Panc1 (cell line): ENCODE measurements at regions of chr10 and their contacts with region 1.

Region 1: DNA sequence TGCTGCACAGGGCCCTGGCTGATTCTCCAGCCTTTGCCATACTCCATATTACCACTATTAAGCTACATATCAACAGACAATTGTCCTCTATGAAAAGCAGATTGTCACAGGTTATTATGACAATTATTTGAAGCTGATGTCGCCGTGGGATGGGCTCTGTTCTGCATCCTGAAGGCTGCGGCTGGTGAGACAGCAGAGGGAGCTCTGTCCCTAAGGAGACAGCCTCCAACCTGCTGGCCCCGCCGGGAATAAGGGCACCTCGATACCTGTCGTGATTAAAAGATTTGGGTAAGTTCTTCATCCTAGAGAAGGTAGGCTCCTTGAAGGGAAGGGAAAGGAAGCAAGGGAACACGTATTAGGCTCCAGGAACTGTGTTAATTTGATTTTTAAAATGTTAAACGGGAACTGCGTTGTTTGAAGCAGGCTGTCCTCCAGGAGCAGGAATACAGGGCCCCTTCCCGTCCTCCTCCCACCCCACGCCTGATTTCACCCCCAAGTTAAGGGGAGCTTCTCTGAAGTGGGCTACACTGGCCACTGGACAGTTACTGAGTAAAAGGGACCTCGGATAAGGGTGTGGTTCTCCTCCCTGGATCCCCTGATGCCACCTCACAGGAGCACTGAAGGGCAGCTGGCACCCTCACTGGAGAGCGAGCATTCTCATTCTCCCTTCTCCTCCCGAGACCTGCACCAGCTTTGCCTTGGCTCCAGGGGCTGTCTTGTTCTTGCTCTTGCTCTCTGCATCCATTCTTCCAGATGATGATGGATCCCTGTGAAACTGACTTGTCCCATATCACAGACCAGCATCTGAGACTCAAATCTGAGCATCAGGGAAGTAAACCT is 11.8 kb upstream of the TIAL1 start:
- DNase-seq: no peak
- ATAC-seq: peak; percentile 98
- H3K4me3 ChIP-seq: peak overlapping the region; percentile 15 to 46; a peak in 3 of 4 replicates
- H3K27ac ChIP-seq: peak overlapping the region; percentile 64
- H3K4me1 ChIP-seq: peaks cover 8% of the 10 kb centered on the region; the same call in 1 of the 2 replicates
- H3K27me3 ChIP-seq: no peaks in the 10 kb centered on the region
- CTCF ChIP-seq: peak; percentile 98

Region 2: DNA sequence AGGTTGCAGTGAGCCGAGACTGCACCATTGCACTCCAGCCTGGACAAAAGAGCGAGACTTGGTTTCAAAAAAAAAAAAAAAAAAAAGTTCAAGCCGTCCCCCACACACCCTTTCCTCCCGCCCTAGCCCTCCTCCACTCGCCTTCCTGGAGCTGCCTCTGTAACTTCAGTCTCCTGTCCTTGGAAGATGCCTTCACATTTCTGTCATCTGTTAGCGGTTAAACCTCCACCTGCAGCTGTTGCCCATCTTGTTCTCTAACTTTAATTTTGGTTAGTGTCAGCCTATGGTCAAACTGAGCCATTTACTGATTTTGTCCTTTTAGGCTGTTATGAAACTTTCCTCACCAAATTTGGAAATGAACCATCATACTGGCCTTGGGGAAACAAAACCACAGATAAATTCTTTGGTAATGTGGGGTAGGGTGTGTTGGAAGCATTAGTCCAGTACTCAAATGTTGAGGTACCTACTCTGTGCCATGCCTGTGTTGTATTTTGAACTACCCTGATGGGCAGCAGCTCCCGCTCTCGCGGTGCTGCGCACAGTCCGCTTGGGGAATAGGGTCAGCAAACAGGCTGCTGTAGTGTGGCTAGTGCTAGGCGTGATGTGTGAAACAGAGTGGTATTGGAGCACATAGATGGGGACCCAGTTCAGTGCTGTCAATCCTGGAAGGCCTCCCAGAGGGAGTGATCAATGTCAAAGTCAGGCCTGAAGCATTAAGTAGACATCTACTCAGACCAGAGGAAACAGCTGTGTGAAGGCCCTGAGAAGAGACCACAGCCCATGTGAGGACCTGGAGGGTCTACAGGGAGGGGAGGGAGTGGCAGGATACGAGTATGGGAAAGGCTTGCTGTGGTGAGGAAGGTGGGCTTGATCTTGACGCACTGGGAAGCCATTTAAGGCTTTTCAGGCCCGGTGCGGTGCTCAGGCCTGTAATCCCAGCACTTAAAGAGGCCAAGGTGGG is 469.9 kb before region 1 on chr10:
- CTCF ChIA-PET with region 1: interaction called, 10 read pairs
- POLR2A ChIA-PET with region 1: no interaction called
- in situ Hi-C with region 1: no loop called
- intact Hi-C with region 1: no loop called
- DNase-seq: no peak
- ATAC-seq: peak; percentile 15; the same call in 1 of the 2 replicates
- H3K4me3 ChIP-seq: no peak overlapping the region
- H3K27ac ChIP-seq: no peak overlapping the region
- H3K4me1 ChIP-seq: no peaks in the 10 kb centered on the region
- H3K27me3 ChIP-seq: no peaks in the 10 kb centered on the region
- CTCF ChIP-seq: no peak

Region 3: GRCh38 chr10:119596537-119597404 is 11.8 kb before region 1 on chr10 and contains the start of gene TIAL1:
- CTCF ChIA-PET with region 1: no interaction called
- POLR2A ChIA-PET with region 1: no interaction called
- in situ Hi-C with region 1: no loop called
- intact Hi-C with region 1: no loop called
- DNase-seq: peak; percentile 99
- ATAC-seq: peak; percentile 95
- H3K4me3 ChIP-seq: peak within 1 kb of the TSS; percentile 89 to 93
- H3K27ac ChIP-seq: peak within 1 kb of the TSS; percentile 96
- H3K4me1 ChIP-seq: peaks cover 39% of the 10 kb centered on the region
- H3K27me3 ChIP-seq: no peaks in the 10 kb centered on the region
- CTCF ChIP-seq: no peak
- total RNA-seq, gene TIAL1: 236 TPM

Region 4: DNA sequence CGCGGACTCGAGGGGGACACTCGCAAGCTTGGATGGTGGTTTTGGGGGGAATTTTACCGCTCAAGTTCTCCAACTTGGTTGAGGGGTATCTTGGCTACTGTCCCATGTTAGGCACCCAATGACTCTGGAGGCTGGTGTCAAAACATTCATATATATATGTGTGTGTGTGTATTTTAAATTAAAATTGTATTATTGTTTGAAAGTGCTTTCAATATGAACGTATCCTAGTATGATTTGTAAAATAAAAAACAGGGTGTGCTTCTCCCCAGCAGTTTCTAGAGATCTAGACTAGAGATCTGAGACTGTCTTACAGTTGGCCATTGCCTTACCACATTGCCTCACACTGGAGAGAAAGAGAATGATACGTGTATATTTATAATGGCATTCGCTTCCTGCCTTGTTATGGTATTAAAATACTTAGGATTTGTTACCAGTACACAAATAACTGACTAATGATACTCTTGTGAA is 43.8 kb after region 1 on chr10:
- CTCF ChIA-PET with region 1: interaction called, 6 read pairs
- POLR2A ChIA-PET with region 1: no interaction called
- in situ Hi-C with region 1: no loop called
- intact Hi-C with region 1: loop called (anchors 1 kb)
- DNase-seq: no peak
- ATAC-seq: peak; percentile 39; the same call in 1 of the 2 replicates
- H3K4me3 ChIP-seq: peak overlapping the region; percentile 70 to 90
- H3K27ac ChIP-seq: peak overlapping the region; percentile 99
- H3K4me1 ChIP-seq: peaks cover 46% of the 10 kb centered on the region
- H3K27me3 ChIP-seq: no peaks in the 10 kb centered on the region
- CTCF ChIP-seq: no peak